ENCODE measurements at regions of chr9 and their contacts with region 1.

Region 1: GRCh38 chr9:83649080-83649479 is 26.1 kb downstream of the IDNK start:
- DNase-seq: peak; percentile 83
- ATAC-seq: peak; percentile 87
- H3K4me3 Mint-ChIP-seq: no peak overlapping the region
- H3K27ac Mint-ChIP-seq: no peak overlapping the region
- H3K4me1 Mint-ChIP-seq: peaks cover 5% of the 10 kb centered on the region
- H3K27me3 Mint-ChIP-seq: no peaks in the 10 kb centered on the region

Region 2: DNA sequence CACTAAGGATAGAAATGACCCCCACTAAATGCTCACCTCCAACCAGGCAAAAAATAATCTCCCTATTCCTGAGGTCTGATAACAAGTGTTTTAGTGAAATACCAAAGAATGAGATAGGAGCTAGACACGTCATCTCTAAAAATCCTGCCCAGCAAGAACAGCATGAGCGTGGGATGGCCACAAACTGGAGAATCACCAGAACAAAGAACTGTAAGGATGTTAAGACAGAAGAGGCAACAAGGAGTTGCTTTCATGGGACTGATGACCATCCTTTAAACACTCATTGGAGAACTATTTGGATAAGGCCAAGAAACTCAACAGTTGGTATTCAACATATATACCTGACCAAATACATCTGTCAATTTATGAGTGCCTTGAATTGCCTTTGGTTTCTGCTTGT is 699.9 kb before region 1 on chr9:
- CTCF ChIA-PET with region 1: no interaction called
- POLR2A ChIA-PET with region 1: no interaction called
- intact Hi-C with region 1: no loop called
- DNase-seq: no peak
- ATAC-seq: no peak
- H3K4me3 Mint-ChIP-seq: no peak overlapping the region
- H3K27ac Mint-ChIP-seq: no peak overlapping the region
- H3K4me1 Mint-ChIP-seq: no peaks in the 10 kb centered on the region
- H3K27me3 Mint-ChIP-seq: no peaks in the 10 kb centered on the region

Region 3: GRCh38 chr9:83622939-83623678 is 26.0 kb before region 1 on chr9 and contains the start of gene IDNK:
- CTCF ChIA-PET with region 1: interaction called, 22 read pairs
- POLR2A ChIA-PET with region 1: no interaction called
- intact Hi-C with region 1: loop called (anchors 1 kb)
- DNase-seq: peak; percentile 77
- ATAC-seq: peak; percentile 89
- H3K4me3 Mint-ChIP-seq: peak within 1 kb of the TSS; percentile 80
- H3K27ac Mint-ChIP-seq: peak within 1 kb of the TSS; percentile 98
- H3K4me1 Mint-ChIP-seq: peaks cover 23% of the 10 kb centered on the region
- H3K27me3 Mint-ChIP-seq: no peaks in the 10 kb centered on the region
- total RNA-seq, gene IDNK: 4.6 to 4.7 TPM

Region 4: GRCh38 chr9:83662933-83663332 is 13.9 kb after region 1 on chr9:
- CTCF ChIA-PET with region 1: interaction called, 12 read pairs
- POLR2A ChIA-PET with region 1: no interaction called
- intact Hi-C with region 1: no loop called
- DNase-seq: no peak
- ATAC-seq: no peak
- H3K4me3 Mint-ChIP-seq: no peak overlapping the region
- H3K27ac Mint-ChIP-seq: no peak overlapping the region
- H3K4me1 Mint-ChIP-seq: peaks cover 15% of the 10 kb centered on the region
- H3K27me3 Mint-ChIP-seq: no peaks in the 10 kb centered on the region

Measured in activated CD4-positive, alpha-beta T cell treated with anti-CD3 and anti-CD28 coated beads for 36 hours (primary cell).